ENCODE measurements at regions of chr10 and their contacts with region 1.

Region 1: DNA sequence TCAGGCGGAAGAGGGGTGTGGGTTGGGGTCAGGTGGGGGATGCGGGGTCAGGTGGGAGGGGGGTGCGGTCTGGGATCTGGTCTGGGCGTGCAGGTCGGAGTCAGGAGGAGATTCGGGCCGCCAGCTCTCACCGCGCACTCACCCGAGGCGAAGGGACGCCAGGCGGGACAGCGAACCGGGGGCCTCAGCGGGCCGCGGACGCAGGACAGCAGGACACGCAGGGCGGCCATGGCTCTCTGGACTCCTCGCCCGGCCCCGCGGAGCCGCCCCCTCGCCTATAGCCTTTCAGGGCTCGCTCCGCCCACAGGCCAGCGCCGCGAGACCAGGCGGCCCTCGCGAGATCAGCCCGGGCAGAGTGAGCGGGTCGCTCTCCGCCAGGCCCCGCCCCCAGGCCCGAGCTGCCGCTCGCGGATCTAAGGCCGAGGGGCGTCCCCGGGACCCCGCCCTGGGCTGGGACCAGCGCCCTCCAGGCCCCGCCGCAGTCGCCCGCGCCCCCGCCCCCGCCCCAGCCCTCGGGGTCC is at the start of gene ECHS1:
- DNase-seq: peak; percentile 96
- ATAC-seq: peak; percentile 96
- H3K4me3 Mint-ChIP-seq: peak within 1 kb of the TSS; percentile 83
- H3K27ac Mint-ChIP-seq: peak within 1 kb of the TSS; percentile 88
- H3K4me1 Mint-ChIP-seq: peaks cover 24% of the 10 kb centered on the region
- H3K27me3 Mint-ChIP-seq: no peaks in the 10 kb centered on the region
- CTCF ChIP-seq: no peak
- total RNA-seq, gene ECHS1: 37.7 and 39.4 TPM in 2 replicates

Region 2: GRCh38 chr10:133405844-133406527 is 32.8 kb after region 1 on chr10:
- CTCF ChIA-PET with region 1: no interaction called
- POLR2A ChIA-PET with region 1: interaction called, 3 read pairs
- intact Hi-C with region 1: loop called (anchors 5 kb)
- DNase-seq: no peak
- ATAC-seq: peak; percentile 36
- H3K4me3 Mint-ChIP-seq: peak overlapping the region; percentile 7
- H3K27ac Mint-ChIP-seq: peak overlapping the region; percentile 51
- H3K4me1 Mint-ChIP-seq: peaks cover 41% of the 10 kb centered on the region
- H3K27me3 Mint-ChIP-seq: no peaks in the 10 kb centered on the region
- CTCF ChIP-seq: no peak